Colonic mucosa (tissue), 4 donors: ENCODE measurements at regions of chr11 and their contacts with region 1.

Region 1: GRCh38 chr11:61627567-61628445 is 46.9 kb upstream of the SYT7 start:
- DNase-seq: peak; percentile 77
- H3K4me3 ChIP-seq: no peak overlapping the region
- H3K27ac ChIP-seq: no peak overlapping the region
- H3K4me1 ChIP-seq: no peaks in the 10 kb centered on the region
- H3K27me3 ChIP-seq: no peaks in the 10 kb centered on the region
- CTCF ChIP-seq: peak; percentile 76

Region 2: GRCh38 chr11:61529537-61530225 is 98.1 kb before region 1 on chr11:
- intact Hi-C with region 1: loop called (anchors 5 kb)
- DNase-seq: no peak
- H3K4me3 ChIP-seq: no peak overlapping the region
- H3K27ac ChIP-seq: no peak overlapping the region
- H3K4me1 ChIP-seq: peaks cover 18% of the 10 kb centered on the region
- H3K27me3 ChIP-seq: no peaks in the 10 kb centered on the region
- CTCF ChIP-seq: no peak

Region 3: DNA sequence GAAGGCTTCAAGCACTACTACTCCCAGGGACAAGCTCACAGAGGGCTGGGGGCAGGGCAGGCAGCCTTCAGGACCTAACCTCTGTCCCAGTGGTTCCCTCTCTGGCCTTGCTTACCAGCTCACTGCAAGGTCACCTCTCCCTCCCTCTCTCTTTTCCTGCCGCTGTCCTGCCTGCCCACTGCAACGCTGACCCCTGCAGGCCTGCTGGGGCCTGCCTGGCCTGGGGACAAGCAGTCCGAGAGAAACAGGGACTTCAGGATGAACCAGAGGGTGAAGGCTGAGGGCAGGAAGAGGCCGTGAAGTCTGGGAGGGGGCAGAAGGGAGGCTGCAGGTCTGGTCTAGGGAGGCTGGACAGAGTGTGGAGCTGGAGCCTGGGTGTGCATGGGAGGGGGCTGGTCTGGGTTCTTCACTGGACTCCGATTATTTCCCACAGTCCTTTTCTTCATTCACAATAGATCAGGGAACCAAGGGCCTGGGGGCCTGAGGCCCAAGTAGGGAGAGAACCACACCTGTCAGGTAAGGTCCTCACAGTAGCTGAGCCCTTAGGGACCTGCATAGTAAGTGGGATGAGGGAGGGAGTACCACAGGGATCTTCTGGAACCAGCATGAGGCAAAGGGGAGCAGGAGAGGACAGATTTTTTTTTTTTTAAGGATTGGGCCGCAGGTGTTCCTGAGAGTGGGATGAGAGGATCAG is 49.9 kb before region 1 on chr11:
- intact Hi-C with region 1: loop called (anchors 5 kb)
- DNase-seq: no peak
- H3K4me3 ChIP-seq: no peak overlapping the region
- H3K27ac ChIP-seq: no peak overlapping the region
- H3K4me1 ChIP-seq: no peaks in the 10 kb centered on the region
- H3K27me3 ChIP-seq: peaks cover 16% of the 10 kb centered on the region
- CTCF ChIP-seq: no peak

Region 4: GRCh38 chr11:61899146-61899841 is 271.5 kb after region 1 on chr11:
- intact Hi-C with region 1: no loop called
- DNase-seq: peak; percentile 90
- H3K4me3 ChIP-seq: no peak overlapping the region
- H3K27ac ChIP-seq: no peak overlapping the region
- H3K4me1 ChIP-seq: no peaks in the 10 kb centered on the region
- H3K27me3 ChIP-seq: no peaks in the 10 kb centered on the region
- CTCF ChIP-seq: peak; percentile 100